ENCODE measurements at regions of chr9 and their contacts with region 1.

Region 1: GRCh38 chr9:21812946-21813568 is 10.6 kb downstream of the MTAP start:
- DNase-seq: peak; percentile 40 to 82 (median 64)
- ATAC-seq: peak; percentile 37 to 76 (median 66)
- H3K4me3 ChIP-seq: no peak overlapping the region
- H3K27ac ChIP-seq: peak overlapping the region in 6 of 12 donors; percentile 3 to 46 (median 24)
- H3K4me1 ChIP-seq: peaks cover 0 to 51% (median 24%) of the 10 kb centered on the region in 12 donors
- H3K27me3 ChIP-seq: no peaks in the 10 kb centered on the region
- CTCF ChIP-seq: peak; percentile 66 to 87 (median 79)
- POLR2A ChIP-seq: no peak

Region 2: DNA sequence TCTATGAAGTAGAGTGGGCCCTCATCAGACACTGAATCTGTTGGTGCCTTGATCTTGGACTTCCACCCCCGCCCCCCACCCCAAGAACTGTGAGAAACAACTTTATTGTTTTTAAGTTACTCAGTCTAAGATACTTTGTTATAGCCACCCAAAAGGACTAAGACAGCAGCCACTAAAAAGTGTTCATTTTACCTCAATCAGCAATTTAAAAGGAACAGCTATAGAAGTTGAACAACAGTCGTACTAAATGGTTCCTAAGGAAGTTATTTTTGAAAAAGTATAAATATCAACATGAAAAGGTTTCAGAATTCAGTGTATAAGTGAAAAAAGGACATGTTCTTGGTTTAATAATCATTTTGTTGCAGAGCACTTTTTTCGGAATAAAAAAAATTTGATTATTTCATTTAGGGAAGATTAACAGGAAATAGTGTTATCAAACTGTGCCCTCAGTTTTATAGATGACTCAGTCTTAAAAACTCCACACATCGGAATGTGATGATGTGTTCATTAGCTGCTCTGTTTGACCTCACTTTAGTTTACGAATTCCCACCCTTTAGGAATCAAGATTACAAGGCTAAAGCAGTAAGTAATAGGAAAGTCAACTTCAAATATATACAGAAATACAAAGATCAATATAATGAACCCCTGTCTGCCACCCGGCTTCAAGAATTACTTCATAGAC is 60.6 kb after region 1 on chr9:
- intact Hi-C with region 1: loop called in 1 of 10 experiments (anchors 10 kb)
- DNase-seq: no peak
- ATAC-seq: no peak
- H3K4me3 ChIP-seq: no peak overlapping the region
- H3K27ac ChIP-seq: no peak overlapping the region
- H3K4me1 ChIP-seq: peaks cover 0 to 4% (median 0%) of the 10 kb centered on the region in 12 donors
- H3K27me3 ChIP-seq: no peaks in the 10 kb centered on the region
- CTCF ChIP-seq: no peak
- POLR2A ChIP-seq: no peak

Region 3: GRCh38 chr9:22008736-22009562 is 195.9 kb after region 1 on chr9 and contains the start of gene CDKN2B:
- intact Hi-C with region 1: loop called in 9 of 10 experiments (anchors 2 to 10 kb)
- DNase-seq: peak; percentile 96 to 99 (median 97)
- ATAC-seq: peak; percentile 99 to 100 (median 100)
- H3K4me3 ChIP-seq: peak within 1 kb of the TSS; percentile 52 to 82 (median 70)
- H3K27ac ChIP-seq: peak within 1 kb of the TSS; percentile 35 to 88 (median 80)
- H3K4me1 ChIP-seq: peaks cover 0 to 22% (median 7%) of the 10 kb centered on the region in 12 donors
- H3K27me3 ChIP-seq: peaks cover 10 to 39% (median 25%) of the 10 kb centered on the region in 9 donors
- CTCF ChIP-seq: peak; percentile 74 to 95 (median 90)
- POLR2A ChIP-seq: peak in 1 of 2 donors; percentile 78
- total RNA-seq, gene CDKN2B: 1.1 to 4.8 (median 1.9) TPM

Region 4: DNA sequence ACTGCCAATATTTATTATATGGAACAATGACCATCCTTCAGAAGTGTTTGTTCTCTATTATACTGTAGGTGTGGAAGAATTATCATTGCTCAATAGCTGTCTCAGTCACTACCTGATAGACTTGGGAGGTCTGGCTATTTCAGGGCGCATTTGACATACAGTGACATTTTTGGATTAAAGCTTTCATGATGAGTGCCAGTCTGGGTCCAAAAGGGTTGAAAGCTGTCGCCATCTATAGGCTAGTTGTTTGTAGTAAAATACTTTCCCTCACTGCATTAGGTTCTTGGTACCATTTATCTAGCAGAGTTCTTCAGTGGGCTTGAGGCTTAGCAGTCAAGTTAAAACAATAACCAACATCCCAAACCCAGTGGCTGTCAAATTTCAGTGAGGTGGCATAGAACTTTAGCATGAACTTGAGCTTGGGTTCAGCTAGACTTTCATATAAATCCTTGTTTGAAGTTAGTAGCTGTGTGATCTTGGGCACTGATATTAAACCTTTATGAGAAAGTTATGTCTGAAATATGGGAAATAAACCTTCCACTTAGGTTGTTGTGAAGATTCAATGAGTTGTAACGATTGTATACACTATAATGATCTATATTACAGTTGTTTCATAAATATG is 306.6 kb after region 1 on chr9:
- intact Hi-C with region 1: loop called in 9 of 10 experiments (anchors 2 to 10 kb)
- DNase-seq: peak in 1 of 5 donors; percentile 7
- ATAC-seq: peak in 3 of 4 donors; percentile 63 to 79 (median 79)
- H3K4me3 ChIP-seq: no peak overlapping the region
- H3K27ac ChIP-seq: no peak overlapping the region
- H3K4me1 ChIP-seq: peaks cover 0 to 5% (median 0%) of the 10 kb centered on the region in 12 donors
- H3K27me3 ChIP-seq: peaks cover 0 to 3% (median 0%) of the 10 kb centered on the region in 9 donors
- CTCF ChIP-seq: peak; percentile 13 to 52 (median 31)
- POLR2A ChIP-seq: no peak

Region 5: DNA sequence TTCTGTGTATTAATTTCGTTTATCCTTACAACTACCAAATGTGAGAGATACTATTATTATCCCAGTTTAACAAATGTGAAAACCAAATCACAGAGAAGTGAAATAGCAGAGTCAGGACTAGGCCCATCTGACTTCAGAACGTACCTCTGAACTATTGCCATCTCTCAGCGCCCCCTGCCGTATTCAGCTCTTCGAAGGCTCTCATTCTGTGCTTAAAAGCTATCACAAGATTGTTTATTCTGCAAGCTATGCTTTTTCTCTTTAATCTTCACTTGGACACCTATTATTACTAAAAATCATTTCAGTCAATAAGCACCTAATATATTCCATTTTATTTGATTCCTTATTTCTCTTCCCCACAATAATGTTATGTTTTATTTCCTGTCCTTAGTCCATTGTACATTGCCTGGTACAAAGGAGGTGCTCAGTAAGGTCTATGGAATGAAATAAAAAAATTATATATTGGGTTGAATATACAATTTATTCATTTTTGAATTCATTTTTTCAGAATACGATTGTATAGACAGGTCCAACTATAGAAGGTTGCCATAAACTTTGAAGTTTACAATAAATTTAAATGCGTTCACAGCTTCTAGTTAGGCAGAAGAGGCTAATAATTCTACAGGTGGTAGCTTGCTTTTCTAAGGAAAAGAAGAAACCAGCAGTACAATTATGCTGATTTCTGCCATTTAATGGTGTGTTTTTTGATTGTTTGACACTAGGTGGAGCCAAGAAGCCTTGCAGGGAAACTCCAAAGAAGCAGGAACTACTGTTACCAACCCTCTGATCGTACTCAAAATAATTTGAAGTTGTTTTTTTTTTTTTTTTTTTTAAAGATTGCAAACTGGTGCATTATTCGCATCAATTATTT is 431.3 kb after region 1 on chr9:
- intact Hi-C with region 1: loop called in 8 of 10 experiments (anchors 2 to 5 kb)
- DNase-seq: no peak
- ATAC-seq: peak in 1 of 4 donors; percentile 62
- H3K4me3 ChIP-seq: peak overlapping the region in 4 of 12 donors; percentile 6 to 34 (median 22)
- H3K27ac ChIP-seq: no peak overlapping the region
- H3K4me1 ChIP-seq: peaks cover 0 to 9% (median 0%) of the 10 kb centered on the region in 12 donors
- H3K27me3 ChIP-seq: no peaks in the 10 kb centered on the region
- CTCF ChIP-seq: peak in 11 of 12 donors; percentile 2 to 63 (median 41)
- POLR2A ChIP-seq: no peak

Region 6: DNA sequence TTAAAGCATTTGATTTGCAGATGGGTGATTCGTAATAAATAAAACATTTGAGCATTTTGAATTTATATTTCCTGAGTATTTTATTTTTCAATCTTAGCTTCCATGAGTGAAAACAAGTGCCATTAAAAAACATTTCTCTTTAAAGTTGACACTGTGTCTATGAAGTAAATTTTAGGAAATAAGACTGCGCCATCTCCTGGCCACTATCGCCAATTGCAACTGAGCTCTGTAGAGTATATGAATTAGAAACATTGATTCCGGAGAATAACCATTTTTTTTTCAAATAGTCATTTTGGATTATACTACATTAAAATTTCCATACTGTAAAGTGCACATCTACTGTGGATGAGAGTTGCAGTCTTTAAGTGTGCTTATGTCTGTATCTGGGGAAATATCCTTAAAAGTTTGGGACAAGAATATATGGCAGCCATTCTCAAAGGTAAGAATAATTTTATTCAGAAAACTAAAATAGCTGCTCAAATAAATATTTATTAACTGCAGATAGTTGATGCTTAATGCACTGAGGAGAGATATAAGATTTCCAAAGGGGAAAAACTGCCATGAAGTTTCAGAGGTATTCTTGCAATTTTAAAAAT is 639.5 kb after region 1 on chr9:
- intact Hi-C with region 1: loop called in 8 of 10 experiments (anchors 5 to 10 kb)
- DNase-seq: peak in 2 of 5 donors; percentile 29 to 51
- ATAC-seq: peak in 1 of 4 donors; percentile 53
- H3K4me3 ChIP-seq: no peak overlapping the region
- H3K27ac ChIP-seq: no peak overlapping the region
- H3K4me1 ChIP-seq: peaks cover 0 to 6% (median 0%) of the 10 kb centered on the region in 12 donors
- H3K27me3 ChIP-seq: peaks cover 0 to 17% (median 0%) of the 10 kb centered on the region in 9 donors
- CTCF ChIP-seq: peak; percentile 54 to 85 (median 76)
- POLR2A ChIP-seq: no peak